ENCODE measurements at regions of chr2 and their contacts with region 1.

Region 1: GRCh38 chr2:42944779-42945415 is 152.5 kb upstream of the HAAO start:
- DNase-seq: no peak
- H3K4me3 ChIP-seq: no peak overlapping the region
- H3K27me3 ChIP-seq: no peaks in the 10 kb centered on the region
- CTCF ChIP-seq: no peak

Region 2: GRCh38 chr2:42859006-42859552 is 85.8 kb before region 1 on chr2:
- CTCF ChIA-PET with region 1: interaction called, 72 read pairs
- POLR2A ChIA-PET with region 1: no interaction called
- DNase-seq: no peak
- H3K4me3 ChIP-seq: no peak overlapping the region
- H3K27me3 ChIP-seq: no peaks in the 10 kb centered on the region
- CTCF ChIP-seq: peak; percentile 91

Region 3: DNA sequence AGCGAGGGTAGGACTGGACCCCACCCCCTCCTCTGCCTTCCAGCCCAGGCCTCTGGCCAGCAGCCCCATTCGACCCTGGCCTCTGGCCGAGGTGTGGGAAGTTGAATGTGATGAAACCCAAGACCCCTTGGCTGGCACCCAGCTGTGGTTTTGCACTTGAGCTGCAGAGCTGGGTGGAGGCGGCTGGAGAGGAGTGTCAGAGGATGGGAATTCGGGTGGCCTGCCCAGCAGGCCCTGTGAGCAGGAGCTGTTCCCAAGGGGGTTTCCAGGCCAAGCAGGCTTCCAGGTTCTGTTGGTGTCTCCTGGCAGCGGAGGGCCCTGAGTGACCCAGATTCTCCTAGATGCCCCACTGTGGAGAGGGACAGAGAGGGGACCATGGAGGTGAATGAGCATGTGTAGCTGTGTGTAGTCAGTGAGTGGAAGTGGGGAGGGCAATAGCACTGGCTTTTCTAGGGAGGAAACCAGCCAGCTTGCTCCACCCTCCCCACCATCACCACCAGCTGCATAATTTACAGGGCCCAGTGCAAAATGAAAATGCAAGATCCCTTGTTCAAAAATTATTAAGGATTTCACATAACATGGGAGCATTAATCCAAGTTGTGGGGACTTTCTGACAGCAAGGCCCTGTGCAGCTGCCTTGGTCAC is 19.7 kb after region 1 on chr2:
- CTCF ChIA-PET with region 1: interaction called, 18 read pairs
- POLR2A ChIA-PET with region 1: no interaction called
- DNase-seq: peak; percentile 85
- H3K4me3 ChIP-seq: no peak overlapping the region
- H3K27me3 ChIP-seq: no peaks in the 10 kb centered on the region
- CTCF ChIP-seq: no peak

Region 4: GRCh38 chr2:43219383-43220228 is 274.7 kb after region 1 on chr2:
- CTCF ChIA-PET with region 1: interaction called, 28 read pairs
- POLR2A ChIA-PET with region 1: interaction called, 6 read pairs
- DNase-seq: no peak
- H3K4me3 ChIP-seq: peak overlapping the region; percentile 21
- H3K27me3 ChIP-seq: no peaks in the 10 kb centered on the region
- CTCF ChIP-seq: no peak

Region 5: GRCh38 chr2:43542285-43542937 is 597.5 kb after region 1 on chr2:
- CTCF ChIA-PET with region 1: interaction called, 10 read pairs
- POLR2A ChIA-PET with region 1: no interaction called
- DNase-seq: no peak
- H3K4me3 ChIP-seq: no peak overlapping the region
- H3K27me3 ChIP-seq: no peaks in the 10 kb centered on the region
- CTCF ChIP-seq: peak; percentile 34